Spleen (tissue), 13 donors: ENCODE measurements at regions of chr14 and their contacts with region 1.

Region 1: DNA sequence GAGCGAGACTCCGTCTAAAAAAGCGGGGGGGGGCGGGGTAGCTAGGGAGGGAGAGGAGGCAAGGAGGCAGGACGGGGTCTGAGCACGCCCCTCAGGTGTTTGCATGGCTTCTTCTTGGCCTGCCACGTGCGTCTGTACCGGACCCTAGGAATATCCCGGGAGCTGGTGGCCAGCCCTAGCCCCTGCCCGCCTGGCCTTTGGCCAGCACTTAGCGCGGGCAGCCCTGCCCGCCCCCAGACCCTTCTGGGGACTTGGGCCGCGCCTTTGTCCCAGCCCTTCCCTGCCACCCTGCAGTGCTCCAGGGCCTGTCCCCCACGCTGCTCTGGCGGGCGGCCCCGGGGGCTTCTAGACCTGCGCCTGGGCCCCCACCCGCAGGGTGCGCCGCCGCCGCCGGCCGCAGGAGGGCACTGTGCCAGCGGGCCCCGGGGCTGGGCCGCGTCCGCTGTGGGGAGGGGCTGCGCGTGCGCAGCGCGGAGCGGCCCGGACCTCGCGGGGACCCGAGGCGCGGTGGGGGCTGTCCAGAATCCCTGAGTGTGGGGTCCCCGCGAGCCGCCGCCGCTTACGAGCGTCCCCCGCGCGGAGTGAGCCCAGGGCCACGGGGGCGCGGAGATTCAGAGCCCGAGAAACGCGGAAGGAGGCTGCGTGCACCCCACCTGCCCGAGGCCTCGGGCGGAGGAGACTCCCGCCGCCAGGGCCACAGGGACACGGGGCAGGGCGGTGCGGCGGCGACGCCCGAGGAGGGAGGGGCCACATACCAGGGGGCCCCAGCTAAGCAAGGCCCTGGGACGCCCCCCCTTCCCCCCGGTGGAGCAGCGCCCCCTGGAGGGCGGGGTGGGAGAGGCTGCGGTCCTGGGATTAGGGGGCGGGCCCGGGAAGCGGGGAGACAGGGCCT is 21.0 kb downstream of the SLC25A29 start:
- DNase-seq: peak; percentile 95
- H3K4me3 ChIP-seq: peak overlapping the region; percentile 59 to 91 (median 74)
- H3K27ac ChIP-seq: peak overlapping the region; percentile 77 to 97 (median 94)
- H3K4me1 ChIP-seq: peaks cover 3 to 67% (median 23%) of the 10 kb centered on the region in 6 donors
- H3K27me3 ChIP-seq: no peaks in the 10 kb centered on the region
- CTCF ChIP-seq: peak; percentile 63 to 90 (median 79)
- POLR2A ChIP-seq: no peak

Region 2: DNA sequence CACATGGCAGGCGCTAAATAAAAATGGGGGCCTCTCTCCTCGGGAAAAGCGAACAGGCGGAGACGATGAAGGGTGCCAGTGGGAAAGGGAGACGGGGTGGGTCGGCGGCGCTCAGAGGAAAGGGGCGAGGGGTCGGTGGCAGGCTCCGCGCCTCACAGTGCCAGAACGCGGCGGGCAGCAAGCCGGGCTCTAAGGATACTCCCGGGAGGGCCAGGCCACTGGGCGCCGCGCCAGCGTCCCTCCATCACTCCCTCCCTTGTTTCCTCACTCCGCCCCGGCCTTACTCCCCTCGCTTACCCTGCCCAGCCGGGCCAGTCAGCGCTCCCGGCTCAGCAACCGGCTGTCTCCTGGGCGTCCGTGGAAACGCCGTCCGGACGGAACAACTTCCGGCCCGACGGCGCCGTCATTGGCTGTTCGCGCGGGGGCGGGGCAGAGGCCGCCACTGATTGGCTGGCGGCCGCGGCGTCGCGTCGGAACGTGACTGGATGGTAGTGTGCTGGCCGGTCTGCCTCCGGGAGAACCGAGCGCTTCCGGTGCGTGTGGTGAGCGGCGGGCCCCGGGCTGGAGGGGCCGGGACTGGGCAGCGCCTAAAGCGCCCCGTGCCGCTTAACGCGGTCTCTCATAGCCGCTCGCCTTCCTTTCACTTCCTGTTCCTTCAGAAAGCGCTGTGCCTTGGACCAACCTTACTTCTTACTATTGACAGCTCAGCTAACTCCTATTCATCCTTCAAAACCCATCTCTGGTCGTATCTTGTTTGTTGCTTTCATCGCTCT is 90.9 kb after region 1 on chr14:
- intact Hi-C with region 1: loop called (anchors 10 kb)
- DNase-seq: peak; percentile 97
- H3K4me3 ChIP-seq: peak within 1 kb of the TSS; percentile 56 to 98 (median 84)
- H3K27ac ChIP-seq: peak within 1 kb of the TSS; percentile 88 to 98 (median 93)
- H3K4me1 ChIP-seq: peaks cover 39 to 64% (median 59%) of the 10 kb centered on the region in 6 donors
- H3K27me3 ChIP-seq: no peaks in the 10 kb centered on the region
- CTCF ChIP-seq: peak in 3 of 11 experiments; percentile 20 to 31 (median 26)
- POLR2A ChIP-seq: peak; percentile 16 to 34 (median 22)